Activated naive CD4-positive, alpha-beta T cell treated with anti-CD3 and anti-CD28 coated beads for 36 hours (primary cell): ENCODE measurements at regions of chr6 and their contacts with region 1.

Region 1: GRCh38 chr6:41920921-41921711 is at the starts of genes BYSL and MED20:
- DNase-seq: peak; percentile 97
- H3K4me3 Mint-ChIP-seq: peak within 1 kb of the TSS; percentile 91
- H3K27ac Mint-ChIP-seq: peak within 1 kb of the TSS; percentile 97
- H3K4me1 Mint-ChIP-seq: peaks cover 54% of the 10 kb centered on the region
- H3K27me3 Mint-ChIP-seq: no peaks in the 10 kb centered on the region
- total RNA-seq, gene BYSL: 49.8 TPM
- total RNA-seq, gene MED20: 24.0 to 27.4 TPM

Region 2: GRCh38 chr6:41846666-41847237 is 74.4 kb before region 1 on chr6:
- CTCF ChIA-PET with region 1: interaction called, 5 read pairs
- intact Hi-C with region 1: loop called (anchors 2 kb)
- DNase-seq: peak; percentile 81
- H3K4me3 Mint-ChIP-seq: no peak overlapping the region
- H3K27ac Mint-ChIP-seq: no peak overlapping the region
- H3K4me1 Mint-ChIP-seq: peaks cover 5% of the 10 kb centered on the region
- H3K27me3 Mint-ChIP-seq: no peaks in the 10 kb centered on the region

Region 3: DNA sequence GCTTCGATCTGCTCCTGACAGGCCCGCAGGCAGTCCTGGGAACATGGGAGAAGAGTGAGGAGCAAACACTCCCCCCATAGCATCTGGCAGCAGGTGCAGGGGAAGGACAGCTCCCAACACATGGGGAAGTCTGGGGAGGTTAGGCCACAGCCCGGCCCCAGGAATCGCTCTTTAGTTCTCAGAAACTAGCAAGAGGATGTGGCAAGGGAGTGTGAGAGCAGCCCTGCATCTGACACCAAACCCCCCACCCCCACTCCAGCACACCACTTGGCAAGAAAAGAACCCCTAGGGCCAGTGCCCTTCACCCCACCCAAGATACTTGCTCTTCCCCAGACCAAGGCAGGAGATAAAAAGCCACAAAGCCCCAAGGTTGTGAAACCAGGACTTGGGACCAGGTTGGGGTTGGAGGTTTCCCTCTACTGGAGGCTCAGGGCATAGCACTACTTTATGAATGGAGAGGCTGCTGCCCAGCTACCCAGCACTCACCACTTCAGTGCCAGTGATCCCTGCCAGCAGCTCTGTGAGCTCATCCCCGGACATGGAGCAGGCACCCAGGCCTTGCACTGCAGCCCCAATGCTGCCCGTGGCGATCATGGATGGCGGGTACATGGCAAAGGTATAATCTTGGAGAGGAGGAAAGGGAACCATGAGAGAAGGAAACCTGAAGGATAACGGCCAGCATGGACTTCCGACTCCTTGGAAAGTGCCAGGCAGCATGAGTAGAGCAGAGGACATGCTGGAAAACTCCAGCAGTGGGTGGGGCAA is 15.1 kb after region 1 on chr6:
- CTCF ChIA-PET with region 1: interaction called, 105 read pairs
- intact Hi-C with region 1: loop called (anchors 1 kb)
- DNase-seq: peak; percentile 80
- H3K4me3 Mint-ChIP-seq: peak overlapping the region; percentile 100
- H3K27ac Mint-ChIP-seq: peak overlapping the region; percentile 99
- H3K4me1 Mint-ChIP-seq: peaks cover 38% of the 10 kb centered on the region
- H3K27me3 Mint-ChIP-seq: no peaks in the 10 kb centered on the region

Region 4: GRCh38 chr6:41958022-41958856 is 37.1 kb after region 1 on chr6:
- CTCF ChIA-PET with region 1: no interaction called
- intact Hi-C with region 1: loop called (anchors 1 kb)
- DNase-seq: peak; percentile 76
- H3K4me3 Mint-ChIP-seq: peak overlapping the region; percentile 32
- H3K27ac Mint-ChIP-seq: peak overlapping the region; percentile 98
- H3K4me1 Mint-ChIP-seq: peaks cover 83% of the 10 kb centered on the region
- H3K27me3 Mint-ChIP-seq: no peaks in the 10 kb centered on the region

Region 5: DNA sequence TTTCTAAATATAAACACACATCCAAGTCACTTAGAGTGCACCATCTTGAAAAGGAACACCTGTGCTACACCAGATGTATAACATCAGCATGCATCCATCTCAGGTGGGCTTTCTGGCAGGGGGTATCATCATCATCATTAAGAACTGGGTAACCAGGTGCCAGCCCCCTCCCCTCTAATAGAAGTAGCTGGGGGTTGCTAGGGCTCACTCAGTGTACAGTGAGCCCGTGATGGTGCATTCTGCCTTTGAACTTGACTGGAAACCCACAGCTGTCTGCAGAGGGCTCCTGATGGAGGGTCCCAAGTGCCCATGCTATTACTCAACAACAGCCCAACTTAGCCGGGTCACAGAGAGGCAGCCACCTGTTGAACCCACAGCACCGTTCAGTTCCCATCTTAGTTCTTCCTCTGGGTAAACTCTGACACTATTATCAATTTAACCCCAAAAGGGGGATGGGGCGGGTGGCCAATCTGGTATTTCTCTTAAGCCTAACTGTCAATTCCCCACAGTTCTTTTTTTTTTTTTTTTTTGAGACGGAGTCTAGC is 53.2 kb after region 1 on chr6:
- CTCF ChIA-PET with region 1: no interaction called
- intact Hi-C with region 1: no loop called
- DNase-seq: peak; percentile 4
- H3K4me3 Mint-ChIP-seq: no peak overlapping the region
- H3K27ac Mint-ChIP-seq: peak overlapping the region; percentile 100
- H3K4me1 Mint-ChIP-seq: peaks cover 89% of the 10 kb centered on the region
- H3K27me3 Mint-ChIP-seq: no peaks in the 10 kb centered on the region

Region 6: GRCh38 chr6:42050266-42051032 is 129.3 kb after region 1 on chr6 and contains the start of gene TAF8:
- CTCF ChIA-PET with region 1: interaction called, 114 read pairs
- intact Hi-C with region 1: loop called (anchors 1 kb)
- DNase-seq: peak; percentile 95
- H3K4me3 Mint-ChIP-seq: peak within 1 kb of the TSS; percentile 83
- H3K27ac Mint-ChIP-seq: peak within 1 kb of the TSS; percentile 88
- H3K4me1 Mint-ChIP-seq: peaks cover 64% of the 10 kb centered on the region
- H3K27me3 Mint-ChIP-seq: no peaks in the 10 kb centered on the region
- total RNA-seq, gene TAF8: 67.3 to 68.5 TPM

Region 7: GRCh38 chr6:43444036-43444435 is 1522.9 kb after region 1 on chr6:
- CTCF ChIA-PET with region 1: no interaction called
- intact Hi-C with region 1: no loop called
- DNase-seq: no peak
- H3K4me3 Mint-ChIP-seq: no peak overlapping the region
- H3K27ac Mint-ChIP-seq: no peak overlapping the region
- H3K4me1 Mint-ChIP-seq: no peaks in the 10 kb centered on the region
- H3K27me3 Mint-ChIP-seq: no peaks in the 10 kb centered on the region